Mammary epithelial cell (primary cell): ENCODE measurements at regions of chr13 and their contacts with region 1.

Region 1: GRCh38 chr13:90867336-90867683 is 480.2 kb upstream of the MIR17HG start:
- DNase-seq: peak; percentile 62
- H3K4me3 ChIP-seq: no peak overlapping the region
- H3K27ac ChIP-seq: no peak overlapping the region
- H3K4me1 ChIP-seq: no peaks in the 10 kb centered on the region
- H3K27me3 ChIP-seq: peaks cover 1% of the 10 kb centered on the region
- CTCF ChIP-seq: peak; percentile 81 to 84

Region 2: GRCh38 chr13:89695343-89696257 is 1171.7 kb before region 1 on chr13:
- CTCF ChIA-PET with region 1: no interaction called
- dilution Hi-C with region 1: no loop called
- in situ Hi-C with region 1: no loop called
- intact Hi-C with region 1: loop called (anchors 5 kb)
- DNase-seq: peak; percentile 44
- H3K4me3 ChIP-seq: no peak overlapping the region
- H3K27ac ChIP-seq: no peak overlapping the region
- H3K4me1 ChIP-seq: no peaks in the 10 kb centered on the region
- H3K27me3 ChIP-seq: no peaks in the 10 kb centered on the region
- CTCF ChIP-seq: peak; percentile 88

Region 3: GRCh38 chr13:90084684-90085290 is 782.5 kb before region 1 on chr13:
- CTCF ChIA-PET with region 1: no interaction called
- dilution Hi-C with region 1: no loop called
- in situ Hi-C with region 1: loop called in 1 of 2 experiments (anchors 25 kb)
- intact Hi-C with region 1: loop called (anchors 5 kb)
- DNase-seq: no peak
- H3K4me3 ChIP-seq: no peak overlapping the region
- H3K27ac ChIP-seq: no peak overlapping the region
- H3K4me1 ChIP-seq: no peaks in the 10 kb centered on the region
- H3K27me3 ChIP-seq: no peaks in the 10 kb centered on the region
- CTCF ChIP-seq: no peak

Region 4: DNA sequence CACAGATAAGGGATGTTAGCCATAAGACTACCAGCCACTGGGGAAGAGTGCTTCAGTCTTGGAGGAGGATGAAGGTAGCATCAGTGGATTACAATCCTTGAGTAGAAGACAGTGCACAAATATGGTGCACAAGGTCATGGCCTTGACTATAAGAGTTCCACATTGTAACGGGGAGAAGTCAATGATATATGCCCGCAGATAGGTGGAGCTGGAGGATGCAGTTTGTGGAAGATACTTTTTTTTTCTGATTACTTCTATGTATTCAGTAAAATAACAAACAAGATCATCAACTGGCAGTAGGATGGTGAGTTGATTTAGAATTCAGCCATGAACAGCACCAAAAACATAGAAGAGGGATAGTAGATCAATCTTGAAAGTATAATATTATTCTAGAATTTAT is 446.6 kb before region 1 on chr13:
- CTCF ChIA-PET with region 1: interaction called, 3 read pairs
- dilution Hi-C with region 1: no loop called
- in situ Hi-C with region 1: no loop called
- intact Hi-C with region 1: loop called (anchors 1 kb)
- DNase-seq: no peak
- H3K4me3 ChIP-seq: no peak overlapping the region
- H3K27ac ChIP-seq: no peak overlapping the region
- H3K4me1 ChIP-seq: peaks cover 10% of the 10 kb centered on the region
- H3K27me3 ChIP-seq: no peaks in the 10 kb centered on the region
- CTCF ChIP-seq: peak in 1 of 2 donors; percentile 25

Region 5: GRCh38 chr13:90502153-90502552 is 365.2 kb before region 1 on chr13:
- CTCF ChIA-PET with region 1: no interaction called
- dilution Hi-C with region 1: no loop called
- in situ Hi-C with region 1: no loop called
- intact Hi-C with region 1: loop called (anchors 1 kb)
- DNase-seq: no peak
- H3K4me3 ChIP-seq: no peak overlapping the region
- H3K27ac ChIP-seq: no peak overlapping the region
- H3K4me1 ChIP-seq: no peaks in the 10 kb centered on the region
- H3K27me3 ChIP-seq: no peaks in the 10 kb centered on the region
- CTCF ChIP-seq: no peak

Region 6: DNA sequence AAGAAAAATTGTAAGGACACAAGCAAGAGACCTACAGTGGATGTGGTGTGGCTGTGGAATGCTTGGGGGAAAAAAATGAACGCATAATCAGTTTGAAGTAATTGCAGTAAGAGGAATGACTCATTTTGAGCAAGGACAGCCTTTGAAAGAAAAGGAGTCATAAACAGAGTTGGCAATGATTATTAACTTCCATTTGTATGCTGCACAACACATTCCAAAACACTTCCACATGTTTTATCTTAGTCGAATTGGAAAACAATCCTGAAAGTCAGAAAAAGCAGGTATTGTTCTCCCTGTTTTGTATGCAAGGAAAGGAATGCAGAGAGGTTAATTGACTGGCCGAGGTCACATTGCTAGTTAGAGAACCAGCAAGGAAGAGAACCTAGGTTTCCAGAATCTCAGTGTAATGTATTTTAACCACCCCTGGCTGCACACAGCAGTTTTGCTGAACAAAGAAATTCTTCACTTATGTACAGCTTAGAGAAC is 149.8 kb before region 1 on chr13:
- CTCF ChIA-PET with region 1: no interaction called
- dilution Hi-C with region 1: no loop called
- in situ Hi-C with region 1: no loop called
- intact Hi-C with region 1: loop called (anchors 10 kb)
- DNase-seq: peak; percentile 76
- H3K4me3 ChIP-seq: no peak overlapping the region
- H3K27ac ChIP-seq: no peak overlapping the region
- H3K4me1 ChIP-seq: peaks cover 15% of the 10 kb centered on the region
- H3K27me3 ChIP-seq: no peaks in the 10 kb centered on the region
- CTCF ChIP-seq: no peak

Region 7: DNA sequence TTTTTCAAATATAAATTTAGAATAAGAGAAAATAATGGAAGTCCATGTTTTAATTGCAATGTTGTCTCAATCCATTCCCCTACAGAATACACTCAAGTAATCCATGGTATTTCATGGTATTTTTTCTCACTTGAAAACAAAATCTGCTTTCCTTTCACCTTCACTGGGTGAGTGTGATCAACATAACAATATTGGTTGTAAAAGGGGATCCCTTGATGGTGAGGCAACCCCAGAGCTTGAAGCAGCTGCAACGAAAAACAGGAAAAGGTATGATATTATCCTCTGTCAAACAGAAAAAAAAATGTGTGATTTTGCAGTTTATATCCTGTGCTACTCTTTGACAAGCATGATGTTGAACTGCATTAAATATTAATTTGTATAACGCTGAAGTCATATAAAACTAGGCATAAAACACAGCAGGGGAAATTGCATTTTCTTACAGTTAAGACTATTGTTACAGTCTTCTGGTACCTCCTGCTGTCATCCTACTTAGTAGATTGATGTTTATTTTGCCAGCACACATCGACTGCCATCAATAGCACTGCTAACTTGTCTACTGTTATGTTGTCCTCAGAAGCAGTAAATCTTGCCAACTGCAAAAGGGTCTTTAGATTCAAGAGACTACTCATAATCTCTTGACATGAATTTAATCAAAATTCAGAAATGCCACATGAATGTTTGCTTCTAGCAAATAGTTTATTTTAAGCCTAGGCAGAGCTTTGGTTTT is 107.1 kb after region 1 on chr13:
- CTCF ChIA-PET with region 1: no interaction called
- dilution Hi-C with region 1: no loop called
- in situ Hi-C with region 1: no loop called
- intact Hi-C with region 1: no loop called
- DNase-seq: no peak
- H3K4me3 ChIP-seq: no peak overlapping the region
- H3K27ac ChIP-seq: no peak overlapping the region
- H3K4me1 ChIP-seq: no peaks in the 10 kb centered on the region
- H3K27me3 ChIP-seq: peaks cover 2% of the 10 kb centered on the region
- CTCF ChIP-seq: no peak